ENCODE measurements at regions of chr11 and their contacts with region 1.

Region 1: DNA sequence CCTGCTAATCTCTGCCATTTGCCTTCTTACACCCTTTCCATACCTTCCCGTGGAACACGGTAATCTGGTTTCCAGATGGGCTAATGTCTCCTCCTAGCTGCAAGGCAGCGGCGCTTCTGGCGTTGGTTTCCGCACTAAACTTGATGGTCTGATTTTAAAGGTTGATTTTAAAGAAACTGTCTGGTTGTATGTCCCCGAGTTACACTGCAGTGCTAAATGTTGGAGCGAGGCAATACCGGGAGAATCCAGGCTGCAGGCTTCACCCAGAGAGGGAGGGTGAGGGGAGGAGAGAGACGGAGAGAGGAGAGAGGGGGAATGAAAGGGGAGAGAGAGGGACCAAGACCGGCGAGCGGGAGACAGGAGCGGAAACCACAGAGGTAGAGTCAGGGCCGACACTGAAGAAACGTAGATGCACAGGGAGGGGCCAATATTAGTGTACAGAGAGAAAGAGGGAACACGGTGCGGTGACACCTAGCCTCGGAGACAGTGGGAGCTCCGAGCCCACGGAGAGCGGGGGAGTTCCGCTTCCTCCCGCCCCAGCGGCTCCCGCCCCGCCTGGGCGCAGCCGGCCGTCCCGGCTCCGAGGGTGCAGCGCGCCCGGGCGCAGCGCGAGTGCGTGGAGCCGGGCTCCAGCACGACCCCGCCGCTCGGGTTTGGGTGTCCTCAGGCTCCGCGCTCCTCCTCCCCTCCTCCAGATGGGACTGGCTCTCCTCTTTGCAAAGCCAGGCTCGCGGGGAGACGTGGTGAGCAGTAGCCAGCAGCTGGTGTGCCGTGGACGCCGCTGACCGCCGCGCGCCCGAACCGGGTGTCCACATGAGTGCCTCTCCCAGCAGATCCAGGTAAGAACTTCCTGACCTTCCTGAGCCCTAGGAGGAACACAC is 71.9 kb upstream of the GRAMD1B start:
- DNase-seq: peak; percentile 66
- H3K4me3 Mint-ChIP-seq: peak overlapping the region; percentile 87
- H3K27ac Mint-ChIP-seq: peak overlapping the region; percentile 66
- H3K4me1 Mint-ChIP-seq: peaks cover 58% of the 10 kb centered on the region
- H3K27me3 Mint-ChIP-seq: peaks cover 5% of the 10 kb centered on the region

Region 2: DNA sequence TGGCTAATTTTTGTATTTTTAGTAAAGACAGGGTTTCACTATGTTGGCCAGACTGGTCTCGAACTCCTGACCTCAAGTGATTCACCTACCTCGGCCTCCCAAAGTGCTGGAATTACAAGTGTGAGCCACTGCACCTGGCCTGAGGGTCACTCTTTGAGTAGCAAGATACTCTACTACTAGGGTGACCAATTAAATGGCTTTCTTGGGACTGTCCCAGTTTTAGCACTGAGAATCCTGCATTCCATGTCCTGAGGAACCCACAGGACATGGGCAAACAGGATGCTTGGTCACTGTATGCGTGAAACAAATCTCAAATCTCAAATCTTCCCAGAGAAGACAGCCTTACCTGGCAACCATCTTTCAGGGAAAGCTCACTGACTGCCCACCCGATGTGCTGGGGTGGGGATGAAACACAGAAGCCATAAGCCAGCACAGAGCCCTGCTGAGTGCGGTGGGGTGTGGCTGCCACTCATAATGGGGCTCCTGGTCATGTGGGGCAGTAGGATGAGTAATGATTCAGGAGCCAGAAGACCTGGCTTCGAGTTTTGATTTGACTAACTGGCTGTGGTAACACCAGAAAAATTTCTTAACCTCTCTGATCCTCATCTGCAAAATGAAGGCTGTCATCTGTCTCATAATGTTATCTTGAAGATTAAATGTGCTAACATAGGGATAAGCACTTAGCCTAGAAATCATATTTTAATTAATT is 174.7 kb before region 1 on chr11:
- CTCF ChIA-PET with region 1: no interaction called
- POLR2A ChIA-PET with region 1: no interaction called
- DNase-seq: peak; percentile 24
- H3K4me3 Mint-ChIP-seq: no peak overlapping the region
- H3K27ac Mint-ChIP-seq: no peak overlapping the region
- H3K4me1 Mint-ChIP-seq: peaks cover 5% of the 10 kb centered on the region
- H3K27me3 Mint-ChIP-seq: peaks cover 46% of the 10 kb centered on the region

Region 3: DNA sequence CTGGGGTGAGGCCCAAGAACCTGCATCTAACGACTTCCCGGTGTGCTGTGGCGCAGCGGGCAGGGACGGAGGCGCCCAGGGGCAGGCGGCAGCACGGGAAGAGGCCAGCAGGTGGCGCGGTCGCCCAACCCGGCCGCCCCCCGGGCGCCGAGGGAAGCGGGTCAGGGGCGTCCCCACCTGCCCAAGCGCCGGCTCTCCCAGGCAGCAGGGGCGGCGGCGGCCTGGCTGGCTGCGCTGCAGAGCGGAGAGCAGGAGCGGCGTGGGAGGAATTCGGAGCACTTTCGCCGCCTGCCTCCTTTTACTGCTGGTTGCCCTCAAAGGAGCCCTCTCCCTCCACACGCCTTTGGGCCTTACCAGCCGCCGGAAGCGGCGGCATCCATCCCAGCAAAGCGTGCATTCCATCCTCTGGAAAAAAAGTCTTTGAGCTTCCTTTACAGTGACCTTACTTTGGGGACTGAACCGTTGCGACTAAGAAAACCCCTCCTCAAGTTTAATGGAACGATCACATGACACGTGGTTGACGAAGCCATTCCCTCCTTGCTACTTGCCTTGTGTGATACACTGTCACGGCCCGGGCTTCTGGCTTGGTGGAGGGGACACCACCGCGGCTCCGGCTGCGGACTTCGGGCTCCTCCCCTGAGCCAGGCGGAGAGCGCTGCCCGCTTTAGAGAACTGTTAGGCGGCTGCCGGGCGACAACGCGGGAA is 56.4 kb before region 1 on chr11:
- CTCF ChIA-PET with region 1: interaction called, 13 read pairs
- POLR2A ChIA-PET with region 1: interaction called, 3 read pairs
- DNase-seq: peak; percentile 78
- H3K4me3 Mint-ChIP-seq: peak overlapping the region; percentile 56
- H3K27ac Mint-ChIP-seq: peak overlapping the region; percentile 59
- H3K4me1 Mint-ChIP-seq: peaks cover 47% of the 10 kb centered on the region
- H3K27me3 Mint-ChIP-seq: peaks cover 3% of the 10 kb centered on the region

Region 4: DNA sequence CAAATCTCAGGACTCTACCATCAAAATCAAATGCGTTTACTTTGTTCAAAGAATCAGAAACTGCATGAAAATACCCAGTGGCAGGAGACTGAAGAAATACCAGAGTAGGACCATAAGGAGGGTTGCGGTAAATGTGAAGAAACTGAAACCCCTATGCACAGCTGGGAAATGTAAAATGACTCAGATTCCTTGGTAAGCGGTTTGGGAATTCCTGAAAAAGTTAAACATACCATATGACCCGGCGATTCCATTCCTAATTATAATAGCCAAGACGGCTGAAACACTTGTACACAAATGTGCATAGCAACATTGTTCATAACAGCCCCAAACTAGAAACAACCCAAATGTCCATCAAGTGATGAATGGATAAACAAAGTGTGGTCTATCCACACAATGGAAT is 42.2 kb before region 1 on chr11:
- CTCF ChIA-PET with region 1: no interaction called
- POLR2A ChIA-PET with region 1: no interaction called
- DNase-seq: no peak
- H3K4me3 Mint-ChIP-seq: no peak overlapping the region
- H3K27ac Mint-ChIP-seq: no peak overlapping the region
- H3K4me1 Mint-ChIP-seq: peaks cover 2% of the 10 kb centered on the region
- H3K27me3 Mint-ChIP-seq: peaks cover 21% of the 10 kb centered on the region

Region 5: GRCh38 chr11:123381817-123382554 is 23.8 kb after region 1 on chr11:
- CTCF ChIA-PET with region 1: interaction called, 14 read pairs
- POLR2A ChIA-PET with region 1: interaction called, 23 read pairs
- DNase-seq: peak; percentile 78
- H3K4me3 Mint-ChIP-seq: peak overlapping the region; percentile 49
- H3K27ac Mint-ChIP-seq: no peak overlapping the region
- H3K4me1 Mint-ChIP-seq: peaks cover 43% of the 10 kb centered on the region
- H3K27me3 Mint-ChIP-seq: no peaks in the 10 kb centered on the region